A673 (cell line): ENCODE measurements at regions of chr10 and their contacts with region 1.

Region 1: DNA sequence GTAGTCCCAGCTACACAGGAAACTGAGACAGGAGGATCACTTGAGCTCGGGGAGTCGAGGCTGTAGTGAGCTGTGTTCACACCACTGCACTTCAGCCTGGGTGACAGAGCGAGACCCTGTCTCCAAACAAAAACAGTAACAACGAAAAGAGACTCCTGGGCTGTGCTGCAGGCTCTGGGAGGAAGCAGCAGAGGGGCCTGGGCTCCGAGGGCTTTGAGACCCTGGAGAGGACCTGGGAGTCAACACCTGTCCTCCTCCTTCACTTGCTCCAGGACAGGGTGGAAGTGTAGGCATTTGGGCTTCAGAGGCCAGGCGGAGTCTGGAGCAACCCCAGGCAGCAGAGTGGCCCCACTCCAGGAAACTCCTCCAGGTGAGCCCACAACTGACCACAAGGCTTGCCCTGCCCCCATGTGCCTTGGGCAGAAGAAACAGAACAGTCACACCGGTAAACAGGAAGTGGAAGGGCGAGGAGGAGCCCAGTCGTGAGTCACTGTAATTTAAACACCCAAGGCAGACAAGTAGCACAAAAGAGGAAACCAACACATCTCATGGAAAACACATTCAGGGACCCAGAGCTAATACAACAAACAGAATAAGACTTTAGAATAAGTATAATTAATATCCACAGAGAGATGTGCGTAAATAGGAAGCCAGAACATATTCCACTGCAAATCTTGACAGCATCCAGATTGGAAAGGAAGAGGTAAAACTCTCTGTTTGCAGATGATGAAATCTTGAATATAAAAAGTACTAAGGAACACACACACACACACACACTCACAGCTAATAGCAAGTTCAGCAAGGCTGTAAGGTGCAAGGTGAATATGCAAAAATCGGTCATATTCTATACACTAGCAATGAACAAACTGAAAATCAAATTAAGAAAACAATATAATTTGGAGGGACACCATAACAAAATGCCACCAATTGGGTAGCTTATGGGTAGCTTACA is 20.5 kb upstream of the RASGEF1A start:
- DNase-seq: no peak
- H3K4me3 ChIP-seq: no peak overlapping the region
- H3K27ac ChIP-seq: no peak overlapping the region
- H3K4me1 ChIP-seq: no peaks in the 10 kb centered on the region
- H3K27me3 ChIP-seq: peaks cover 10% of the 10 kb centered on the region
- CTCF ChIP-seq: no peak

Region 2: DNA sequence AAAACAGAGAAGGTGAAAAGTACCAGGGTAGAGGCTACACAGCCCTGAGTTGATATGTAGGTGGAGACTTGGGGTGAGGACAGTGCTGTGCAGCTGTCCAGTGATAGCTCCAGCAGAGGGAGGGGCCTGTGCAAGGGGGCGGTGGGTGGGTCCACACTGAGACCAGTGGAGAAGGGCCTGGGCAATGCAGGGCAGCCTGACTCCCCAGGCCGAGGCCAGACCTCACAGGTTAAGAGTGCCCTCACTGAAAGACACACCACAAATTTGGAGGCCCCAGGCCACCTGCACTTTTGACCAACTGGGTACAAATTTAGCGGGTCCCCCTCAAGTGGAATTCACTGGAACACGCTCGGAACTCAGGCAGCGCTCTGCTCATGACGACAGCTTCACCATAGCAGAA is 13.8 kb before region 1 on chr10:
- CTCF ChIA-PET with region 1: no interaction called
- POLR2A ChIA-PET with region 1: no interaction called
- intact Hi-C with region 1: loop called (anchors 1 kb)
- DNase-seq: no peak
- H3K4me3 ChIP-seq: no peak overlapping the region
- H3K27ac ChIP-seq: no peak overlapping the region
- H3K4me1 ChIP-seq: no peaks in the 10 kb centered on the region
- H3K27me3 ChIP-seq: peaks cover 55% of the 10 kb centered on the region
- CTCF ChIP-seq: no peak